ENCODE measurements at regions of chr10 and their contacts with region 1.

Region 1: GRCh38 chr10:63054889-63055611 is 78.1 kb upstream of the NRBF2 start:
- DNase-seq: peak; percentile 34
- H3K4me3 Mint-ChIP-seq: no peak overlapping the region
- H3K27ac Mint-ChIP-seq: no peak overlapping the region
- H3K4me1 Mint-ChIP-seq: peaks cover 9% of the 10 kb centered on the region
- H3K27me3 Mint-ChIP-seq: peaks cover 9% of the 10 kb centered on the region

Region 2: DNA sequence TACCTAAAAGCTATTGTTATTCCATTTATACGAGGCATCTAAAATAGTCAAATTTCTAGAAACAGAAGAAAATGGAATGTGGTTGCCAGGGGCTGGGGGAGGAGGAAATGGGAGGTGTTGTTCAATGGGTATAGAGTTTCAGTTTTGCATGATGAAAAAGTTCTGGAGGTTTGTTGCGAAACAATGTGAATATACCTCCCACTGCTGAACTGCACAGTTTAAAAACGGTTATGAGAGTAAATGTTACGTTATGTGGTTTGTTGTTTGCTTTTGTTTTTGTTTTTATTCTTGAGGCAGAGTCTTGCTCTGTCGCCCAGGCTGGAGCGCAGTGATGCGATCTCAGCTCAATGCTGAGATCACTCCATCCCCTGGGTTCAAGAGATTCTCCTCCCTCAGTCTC is 13.2 kb after region 1 on chr10:
- intact Hi-C with region 1: loop called (anchors 2 kb)
- DNase-seq: peak; percentile 70
- H3K4me3 Mint-ChIP-seq: peak overlapping the region; percentile 49
- H3K27ac Mint-ChIP-seq: peak overlapping the region; percentile 34
- H3K4me1 Mint-ChIP-seq: peaks cover 38% of the 10 kb centered on the region
- H3K27me3 Mint-ChIP-seq: peaks cover 15% of the 10 kb centered on the region

Region 3: DNA sequence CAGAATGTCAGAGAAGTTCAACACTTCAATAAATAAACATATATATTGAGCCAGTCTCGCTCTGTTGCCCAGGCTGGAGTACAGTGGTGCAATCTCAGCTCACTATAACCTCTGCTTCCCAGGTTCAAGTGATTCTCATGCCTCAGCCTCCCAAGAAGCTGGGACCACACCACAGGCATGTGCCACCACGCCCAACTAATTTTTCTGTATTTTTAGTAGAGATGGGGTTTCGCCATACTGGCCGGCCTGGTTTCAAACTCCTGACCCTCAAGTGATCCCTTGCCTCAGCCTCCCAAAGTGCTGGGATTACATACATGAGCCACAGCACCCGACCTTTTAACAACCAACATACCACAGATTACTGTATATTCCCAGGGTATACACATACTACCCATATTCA is 276.5 kb after region 1 on chr10:
- intact Hi-C with region 1: no loop called
- DNase-seq: peak; percentile 37
- H3K4me3 Mint-ChIP-seq: no peak overlapping the region
- H3K27ac Mint-ChIP-seq: no peak overlapping the region
- H3K4me1 Mint-ChIP-seq: no peaks in the 10 kb centered on the region
- H3K27me3 Mint-ChIP-seq: no peaks in the 10 kb centered on the region